MCF 10A (cell line): ENCODE measurements at regions of chr4 and their contacts with region 1.

Region 1: GRCh38 chr4:82721819-82722423 is 76.7 kb downstream of the SCD5 start:
- DNase-seq: peak; percentile 45
- H3K4me3 Mint-ChIP-seq: no peak overlapping the region
- H3K27ac Mint-ChIP-seq: no peak overlapping the region
- H3K4me1 Mint-ChIP-seq: no peaks in the 10 kb centered on the region
- H3K27me3 Mint-ChIP-seq: no peaks in the 10 kb centered on the region
- CTCF ChIP-seq: peak; percentile 21

Region 2: GRCh38 chr4:82462415-82462831 is 259.5 kb before region 1 on chr4:
- CTCF ChIA-PET with region 1: interaction called, 4 read pairs
- POLR2A ChIA-PET with region 1: interaction called, 3 read pairs
- intact Hi-C with region 1: loop called (anchors 5 kb)
- DNase-seq: peak; percentile 90
- H3K4me3 Mint-ChIP-seq: no peak overlapping the region
- H3K27ac Mint-ChIP-seq: no peak overlapping the region
- H3K4me1 Mint-ChIP-seq: peaks cover 6% of the 10 kb centered on the region
- H3K27me3 Mint-ChIP-seq: no peaks in the 10 kb centered on the region
- CTCF ChIP-seq: peak; percentile 86

Region 3: DNA sequence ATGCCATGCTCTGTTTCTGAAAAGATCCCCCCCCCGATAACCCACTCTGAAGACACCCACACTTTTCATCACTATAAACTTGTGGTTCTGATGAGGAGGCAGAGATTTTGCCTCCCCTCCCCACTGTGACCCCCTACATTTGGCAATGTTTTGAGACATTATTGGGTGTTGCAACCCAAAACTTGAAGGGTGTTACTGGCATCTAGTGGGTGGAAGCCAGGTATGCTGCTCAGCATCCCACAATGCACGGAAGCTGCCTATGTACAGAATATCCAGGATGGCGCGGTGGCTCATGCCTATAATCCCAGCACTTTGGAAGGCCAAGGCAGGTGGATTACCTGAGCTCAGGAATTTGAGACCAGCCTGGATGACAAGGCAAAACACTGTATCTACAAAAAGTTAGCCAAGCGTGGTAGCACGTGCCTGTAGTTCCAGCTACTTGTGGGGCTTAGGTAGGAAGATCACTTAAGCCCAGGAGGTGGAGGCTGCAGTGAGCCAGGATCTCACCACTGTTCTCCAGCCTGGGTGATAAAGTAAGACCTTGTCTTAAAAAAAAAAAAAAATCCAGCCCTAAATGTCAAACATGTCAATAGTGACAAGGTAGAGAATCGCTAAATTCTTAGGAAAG is 10.6 kb before region 1 on chr4:
- CTCF ChIA-PET with region 1: interaction called, 12 read pairs
- POLR2A ChIA-PET with region 1: no interaction called
- intact Hi-C with region 1: no loop called
- DNase-seq: no peak
- H3K4me3 Mint-ChIP-seq: no peak overlapping the region
- H3K27ac Mint-ChIP-seq: no peak overlapping the region
- H3K4me1 Mint-ChIP-seq: no peaks in the 10 kb centered on the region
- H3K27me3 Mint-ChIP-seq: no peaks in the 10 kb centered on the region
- CTCF ChIP-seq: no peak

Region 4: DNA sequence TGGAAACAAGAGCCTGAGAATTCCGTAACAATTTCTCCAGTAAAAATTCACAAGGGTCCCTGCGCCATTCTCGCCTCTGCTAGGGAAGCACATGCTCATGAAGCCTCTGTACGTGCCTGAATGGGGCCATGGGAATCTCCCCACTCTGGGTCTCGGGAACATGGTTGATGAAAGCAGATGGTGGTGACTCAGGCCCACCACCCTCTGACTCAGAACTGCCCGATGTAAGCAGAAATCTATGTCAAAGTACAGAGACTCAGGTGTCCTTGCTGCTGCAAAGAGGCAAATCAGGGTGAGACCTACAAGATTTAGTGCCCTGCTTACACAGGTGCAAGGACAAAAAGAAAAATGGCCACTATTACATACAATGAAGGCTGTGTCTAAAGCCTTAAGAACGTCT is 11.7 kb after region 1 on chr4:
- CTCF ChIA-PET with region 1: interaction called, 12 read pairs
- POLR2A ChIA-PET with region 1: no interaction called
- intact Hi-C with region 1: no loop called
- DNase-seq: peak; percentile 67
- H3K4me3 Mint-ChIP-seq: no peak overlapping the region
- H3K27ac Mint-ChIP-seq: no peak overlapping the region
- H3K4me1 Mint-ChIP-seq: peaks cover 9% of the 10 kb centered on the region
- H3K27me3 Mint-ChIP-seq: no peaks in the 10 kb centered on the region
- CTCF ChIP-seq: no peak

Region 5: GRCh38 chr4:82785611-82786400 is 63.9 kb after region 1 on chr4:
- CTCF ChIA-PET with region 1: interaction called, 19 read pairs
- POLR2A ChIA-PET with region 1: interaction called, 3 read pairs
- intact Hi-C with region 1: no loop called
- DNase-seq: peak; percentile 96
- H3K4me3 Mint-ChIP-seq: peak overlapping the region; percentile 53
- H3K27ac Mint-ChIP-seq: peak overlapping the region; percentile 52
- H3K4me1 Mint-ChIP-seq: peaks cover 37% of the 10 kb centered on the region
- H3K27me3 Mint-ChIP-seq: no peaks in the 10 kb centered on the region
- CTCF ChIP-seq: no peak

Region 6: GRCh38 chr4:82798168-82799005 is 76.5 kb after region 1 on chr4 and contains the start of gene SCD5:
- CTCF ChIA-PET with region 1: interaction called, 51 read pairs
- POLR2A ChIA-PET with region 1: interaction called, 4 read pairs
- intact Hi-C with region 1: loop called (anchors 1 kb)
- DNase-seq: peak; percentile 77
- H3K4me3 Mint-ChIP-seq: peak within 1 kb of the TSS; percentile 84
- H3K27ac Mint-ChIP-seq: no peak within 1 kb of the TSS
- H3K4me1 Mint-ChIP-seq: peaks cover 11% of the 10 kb centered on the region
- H3K27me3 Mint-ChIP-seq: no peaks in the 10 kb centered on the region
- CTCF ChIP-seq: no peak
- total RNA-seq, gene SCD5: 3.5 and 3.6 TPM in 2 replicates